Natural killer cell (primary cell): ENCODE measurements at regions of chr17 and their contacts with region 1.

Region 1: DNA sequence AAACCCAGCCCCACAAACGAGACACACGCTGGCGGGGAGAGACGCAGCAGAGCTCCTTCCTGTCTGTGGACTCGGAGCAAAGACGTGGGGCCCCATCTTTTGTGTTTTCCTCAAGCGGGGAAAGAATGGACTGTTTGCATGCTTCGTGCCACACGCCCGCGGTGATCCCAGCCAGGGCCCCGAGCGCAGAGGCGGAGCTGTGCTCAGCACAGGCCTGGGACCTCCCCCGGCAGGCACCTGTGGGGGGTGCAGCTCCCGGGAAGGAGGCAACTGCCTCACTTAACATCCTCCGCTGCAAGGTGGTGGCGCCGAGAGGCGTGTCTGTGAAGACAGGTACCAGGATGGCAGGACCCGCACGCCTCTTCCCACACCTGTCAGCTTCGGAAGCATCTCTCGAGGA is 19.1 kb downstream of the TRARG1 start:
- DNase-seq: peak in 1 of 2 donors; percentile 67
- ATAC-seq: no peak
- H3K4me3 ChIP-seq: no peak overlapping the region
- H3K4me3 Mint-ChIP-seq: no peak overlapping the region
- H3K27ac ChIP-seq: no peak overlapping the region
- H3K27ac Mint-ChIP-seq: no peak overlapping the region
- H3K4me1 ChIP-seq: peaks cover 49% of the 10 kb centered on the region
- H3K4me1 Mint-ChIP-seq: peaks cover 23 to 59% of the 10 kb centered on the region in 2 donors
- H3K27me3 ChIP-seq: peaks cover 10% of the 10 kb centered on the region
- H3K27me3 Mint-ChIP-seq: peaks cover 0 to 9% of the 10 kb centered on the region in 2 donors
- CTCF ChIP-seq: no peak

Region 2: GRCh38 chr17:596763-597644 is 701.6 kb before region 1 on chr17:
- intact Hi-C with region 1: no loop called
- DNase-seq: no peak
- ATAC-seq: no peak
- H3K4me3 ChIP-seq: no peak overlapping the region
- H3K4me3 Mint-ChIP-seq: no peak overlapping the region
- H3K27ac ChIP-seq: no peak overlapping the region
- H3K27ac Mint-ChIP-seq: no peak overlapping the region
- H3K4me1 ChIP-seq: no peaks in the 10 kb centered on the region
- H3K4me1 Mint-ChIP-seq: no peaks in the 10 kb centered on the region
- H3K27me3 ChIP-seq: no peaks in the 10 kb centered on the region
- H3K27me3 Mint-ChIP-seq: no peaks in the 10 kb centered on the region
- CTCF ChIP-seq: no peak

Region 3: DNA sequence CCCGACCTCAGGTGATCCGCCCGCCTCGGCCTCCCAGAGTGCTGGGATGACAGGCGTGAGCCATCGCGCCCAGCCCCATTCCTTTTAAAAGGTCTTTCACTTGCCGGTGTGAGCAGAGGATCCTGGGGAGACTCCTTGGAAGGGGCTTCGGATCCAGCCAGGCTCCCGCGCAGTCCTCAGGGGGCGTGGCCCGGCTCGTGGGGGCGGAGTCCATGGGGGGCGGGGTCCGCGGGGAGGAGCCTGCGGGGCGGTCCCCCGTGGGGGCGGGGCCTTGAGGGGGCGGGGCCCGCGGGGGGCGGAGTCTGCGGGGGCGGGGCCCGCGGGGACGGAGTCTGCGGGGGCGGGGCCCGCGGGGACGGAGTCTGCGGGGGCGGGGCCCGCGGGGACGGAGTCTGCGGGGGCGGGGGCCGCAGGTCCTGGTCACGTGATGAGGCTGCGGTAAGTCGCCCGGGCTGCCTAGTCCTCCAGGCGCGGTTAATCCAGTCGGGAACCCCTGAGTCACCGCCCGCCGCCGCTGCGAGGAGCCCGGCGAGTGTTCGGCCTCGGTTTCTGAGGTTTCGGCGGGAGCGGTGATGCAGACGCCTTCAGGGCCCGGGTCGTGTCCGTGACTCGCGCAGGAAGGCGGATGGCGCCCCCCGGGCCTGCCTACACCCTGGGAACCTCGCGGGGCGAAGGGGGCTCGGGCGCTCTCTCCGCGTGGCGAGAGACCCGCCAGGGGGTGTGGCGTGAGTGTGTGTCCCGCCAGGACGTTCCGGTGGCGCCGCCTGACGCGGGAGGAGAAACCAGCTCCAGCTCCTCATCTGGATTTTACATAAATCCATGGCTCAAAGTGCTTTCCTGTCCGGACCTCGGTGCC is 95.3 kb before region 1 on chr17:
- intact Hi-C with region 1: loop called (anchors 5 kb)
- DNase-seq: peak; percentile 69 to 75
- ATAC-seq: peak; percentile 57 to 82 (median 62)
- H3K4me3 ChIP-seq: peak overlapping the region; percentile 14
- H3K4me3 Mint-ChIP-seq: peak overlapping the region; percentile 87
- H3K27ac ChIP-seq: no peak overlapping the region
- H3K27ac Mint-ChIP-seq: peak overlapping the region in 1 of 2 donors; percentile 96
- H3K4me1 ChIP-seq: peaks cover 72% of the 10 kb centered on the region
- H3K4me1 Mint-ChIP-seq: peaks cover 36 to 37% of the 10 kb centered on the region in 2 donors
- H3K27me3 ChIP-seq: no peaks in the 10 kb centered on the region
- H3K27me3 Mint-ChIP-seq: no peaks in the 10 kb centered on the region
- CTCF ChIP-seq: no peak

Region 4: GRCh38 chr17:1267471-1267947 is 31.1 kb before region 1 on chr17:
- intact Hi-C with region 1: loop called (anchors 1 kb)
- DNase-seq: peak in 1 of 2 donors; percentile 31
- ATAC-seq: no peak
- H3K4me3 ChIP-seq: peak overlapping the region; percentile 95
- H3K4me3 Mint-ChIP-seq: peak overlapping the region; percentile 81
- H3K27ac ChIP-seq: peak overlapping the region; percentile 89
- H3K27ac Mint-ChIP-seq: peak overlapping the region; percentile 89
- H3K4me1 ChIP-seq: peaks cover 15% of the 10 kb centered on the region
- H3K4me1 Mint-ChIP-seq: peaks cover 11 to 13% of the 10 kb centered on the region in 2 donors
- H3K27me3 ChIP-seq: peaks cover 16% of the 10 kb centered on the region
- H3K27me3 Mint-ChIP-seq: peaks cover 12 to 13% of the 10 kb centered on the region in 2 donors
- CTCF ChIP-seq: no peak

Region 5: DNA sequence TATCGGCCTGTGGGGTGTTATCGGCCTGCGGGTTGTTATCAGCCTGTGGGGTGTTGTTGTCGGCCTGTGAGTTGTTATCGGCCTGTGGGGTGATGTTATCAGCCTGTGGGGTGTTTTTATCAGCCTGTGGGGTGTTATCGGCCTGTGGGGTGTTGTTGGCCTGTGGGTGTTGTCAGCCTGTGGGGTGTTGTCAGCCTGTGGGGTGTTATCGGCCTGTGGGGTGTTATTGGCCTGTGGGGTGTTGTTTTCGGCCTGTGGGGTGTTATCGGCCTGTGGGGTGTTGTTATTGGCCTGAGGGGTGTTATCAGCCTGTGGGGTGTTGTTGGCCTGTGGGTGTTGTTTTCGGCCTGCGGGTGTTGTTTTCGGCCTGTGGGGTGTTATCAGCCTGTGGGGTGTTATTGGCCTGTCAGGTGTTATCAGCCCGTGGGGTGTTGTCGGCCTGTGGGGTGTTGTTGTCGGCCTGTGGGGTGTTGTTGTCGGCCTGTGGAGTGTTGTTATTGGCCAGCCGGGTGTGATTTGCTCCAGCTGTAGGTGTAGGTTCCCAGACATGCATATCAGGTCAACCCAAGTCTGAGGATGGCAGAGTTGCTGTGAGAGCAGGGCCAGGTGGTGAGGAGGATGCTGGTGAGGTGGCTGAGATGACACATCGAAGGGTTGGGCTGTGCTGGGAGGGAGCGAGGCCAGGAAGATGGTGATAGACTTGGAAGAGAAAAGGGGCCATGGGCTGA is 12.1 kb before region 1 on chr17:
- intact Hi-C with region 1: loop called (anchors 1 kb)
- DNase-seq: peak in 1 of 2 donors; percentile 57
- ATAC-seq: peak; percentile 76 to 81 (median 78)
- H3K4me3 ChIP-seq: no peak overlapping the region
- H3K4me3 Mint-ChIP-seq: peak overlapping the region; percentile 65
- H3K27ac ChIP-seq: peak overlapping the region; percentile 81
- H3K27ac Mint-ChIP-seq: peak overlapping the region; percentile 90 to 91
- H3K4me1 ChIP-seq: peaks cover 32% of the 10 kb centered on the region
- H3K4me1 Mint-ChIP-seq: peaks cover 34 to 54% of the 10 kb centered on the region in 2 donors
- H3K27me3 ChIP-seq: no peaks in the 10 kb centered on the region
- H3K27me3 Mint-ChIP-seq: no peaks in the 10 kb centered on the region
- CTCF ChIP-seq: no peak